CD8-positive, alpha-beta memory T cell (primary cell): ENCODE measurements at regions of chr17 and their contacts with region 1.

Region 1: GRCh38 chr17:38982858-38983746 is 15.9 kb upstream of the FBXO47 start:
- DNase-seq: peak in 4 of 5 donors; percentile 27 to 62 (median 58)
- H3K4me3 ChIP-seq: no peak overlapping the region
- H3K4me3 Mint-ChIP-seq: no peak overlapping the region
- H3K27ac ChIP-seq: no peak overlapping the region
- H3K27ac Mint-ChIP-seq: no peak overlapping the region
- H3K4me1 ChIP-seq: no peaks in the 10 kb centered on the region
- H3K4me1 Mint-ChIP-seq: peaks cover 0 to 5% (median 0%) of the 10 kb centered on the region in 3 donors
- H3K27me3 ChIP-seq: no peaks in the 10 kb centered on the region
- H3K27me3 Mint-ChIP-seq: no peaks in the 10 kb centered on the region

Region 2: DNA sequence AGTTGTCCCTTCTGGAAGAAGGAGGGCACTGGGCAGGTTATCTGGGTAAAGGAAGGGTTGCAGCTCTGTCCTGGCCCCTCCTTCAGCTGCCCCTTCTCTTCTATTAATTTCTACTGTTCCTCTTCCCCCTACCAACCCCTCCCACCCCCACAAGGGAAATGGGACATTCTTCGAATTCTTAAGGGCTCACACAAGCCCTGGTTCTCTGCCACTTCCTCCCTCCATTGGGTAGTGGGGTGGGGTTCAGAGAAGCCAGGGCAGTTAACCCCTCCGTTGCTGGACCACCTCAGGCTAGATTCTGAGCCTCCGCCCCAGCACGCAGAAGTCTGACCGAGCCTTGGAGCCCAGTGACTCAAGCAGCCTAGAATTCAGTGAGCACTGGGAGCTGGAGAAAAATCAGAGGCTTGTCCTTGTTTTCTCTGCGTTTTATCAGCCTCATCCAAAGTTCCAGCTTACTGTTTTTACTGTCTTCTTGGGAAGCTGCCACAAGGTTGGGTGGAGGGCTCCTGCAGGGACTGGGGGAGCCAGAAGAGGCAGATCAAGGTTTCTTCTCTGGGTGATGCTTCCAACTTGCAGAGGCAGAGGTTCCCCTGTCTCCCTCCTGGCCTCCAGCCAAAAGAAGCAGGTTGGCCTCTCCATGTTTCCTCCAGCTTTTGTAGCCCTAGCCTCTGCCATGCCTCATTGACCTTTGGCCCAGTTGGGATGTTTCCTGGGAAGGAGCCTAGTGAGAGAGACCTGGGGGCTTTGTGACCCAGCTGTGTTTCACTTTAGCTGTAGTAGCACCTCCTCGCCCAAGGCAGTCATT is 103.0 kb before region 1 on chr17:
- CTCF ChIA-PET with region 1: no interaction called
- POLR2A ChIA-PET with region 1: no interaction called
- DNase-seq: no peak
- H3K4me3 ChIP-seq: peak overlapping the region; percentile 51
- H3K4me3 Mint-ChIP-seq: peak overlapping the region; percentile 50 to 83 (median 55)
- H3K27ac ChIP-seq: no peak overlapping the region
- H3K27ac Mint-ChIP-seq: peak overlapping the region; percentile 40 to 94 (median 85)
- H3K4me1 ChIP-seq: peaks cover 95% of the 10 kb centered on the region
- H3K4me1 Mint-ChIP-seq: peaks cover 83 to 93% (median 91%) of the 10 kb centered on the region in 3 donors
- H3K27me3 ChIP-seq: no peaks in the 10 kb centered on the region
- H3K27me3 Mint-ChIP-seq: peaks cover 0 to 2% of the 10 kb centered on the region in 2 donors

Region 3: DNA sequence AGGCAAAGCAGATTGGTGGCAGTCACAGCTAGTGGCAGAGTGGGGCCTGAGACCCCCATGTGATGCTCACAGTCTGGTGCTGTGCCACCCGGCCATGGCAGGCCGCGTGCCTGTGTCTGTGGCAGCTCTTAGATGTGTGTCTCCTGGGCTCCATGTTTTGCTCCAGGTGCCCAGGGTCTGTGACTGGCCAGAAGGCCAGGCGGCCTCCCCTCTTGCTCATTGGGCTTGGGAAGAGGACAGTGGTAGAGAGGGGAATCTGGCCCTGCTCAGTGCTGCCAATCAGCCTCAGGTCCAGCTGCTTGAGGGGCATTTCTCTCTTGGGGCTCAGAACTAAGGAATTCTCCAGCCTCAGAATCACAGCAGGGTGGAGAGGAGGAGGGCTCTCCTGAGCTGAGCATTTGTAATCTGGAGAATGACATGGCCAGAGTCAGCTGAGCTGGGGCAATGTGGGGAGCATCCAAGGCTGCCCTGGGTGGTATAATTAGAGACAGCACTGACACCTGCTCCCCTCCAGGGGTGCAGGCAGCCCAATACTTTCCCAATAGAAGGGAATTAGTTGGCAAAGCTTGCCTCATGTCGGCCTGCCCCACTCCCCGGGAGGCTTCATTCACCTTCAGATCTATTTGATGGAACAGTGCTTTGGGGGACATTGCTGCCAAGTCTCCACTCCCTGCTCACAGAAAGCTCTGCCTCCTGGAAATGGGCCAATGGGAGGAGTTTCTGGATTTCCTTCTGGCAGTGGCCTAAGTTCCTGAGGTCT is 60.4 kb before region 1 on chr17:
- CTCF ChIA-PET with region 1: interaction called, 14 read pairs
- POLR2A ChIA-PET with region 1: no interaction called
- DNase-seq: no peak
- H3K4me3 ChIP-seq: no peak overlapping the region
- H3K4me3 Mint-ChIP-seq: no peak overlapping the region
- H3K27ac ChIP-seq: no peak overlapping the region
- H3K27ac Mint-ChIP-seq: peak overlapping the region in 3 of 8 donors; percentile 15 to 35 (median 30)
- H3K4me1 ChIP-seq: peaks cover 24% of the 10 kb centered on the region
- H3K4me1 Mint-ChIP-seq: peaks cover 35 to 48% (median 36%) of the 10 kb centered on the region in 3 donors
- H3K27me3 ChIP-seq: no peaks in the 10 kb centered on the region
- H3K27me3 Mint-ChIP-seq: peaks cover 0 to 2% of the 10 kb centered on the region in 2 donors

Region 4: DNA sequence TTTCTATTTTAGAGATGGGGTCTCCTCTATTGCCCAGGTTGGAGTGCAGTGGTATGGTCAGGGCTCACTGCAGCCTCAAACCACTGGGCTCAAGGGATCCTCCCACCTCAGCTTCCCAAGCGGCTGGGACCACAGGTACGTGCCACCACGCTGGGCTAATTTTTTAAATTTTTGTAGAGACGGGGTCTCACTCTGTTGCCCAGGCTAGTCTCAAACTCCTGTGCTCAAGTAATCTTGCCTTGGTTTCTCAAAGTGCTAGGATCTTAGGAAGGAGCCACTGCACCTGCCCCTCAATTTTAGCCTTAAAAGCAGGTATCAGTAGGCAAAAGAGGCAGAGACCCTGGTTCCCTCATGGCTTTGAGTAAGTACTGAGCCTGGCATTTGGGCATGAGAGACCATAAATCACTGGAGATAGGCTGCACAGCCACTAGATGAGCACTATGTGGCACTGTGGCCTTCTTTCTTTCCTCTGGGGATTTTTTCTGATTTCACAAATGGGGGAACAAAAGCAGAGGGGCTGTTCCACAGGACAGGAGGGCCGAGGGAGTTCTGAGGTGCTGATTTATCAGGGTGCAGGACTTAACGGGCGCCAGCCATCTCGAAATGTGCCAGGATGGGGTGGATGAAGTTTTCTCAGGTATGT is 86.1 kb after region 1 on chr17:
- CTCF ChIA-PET with region 1: interaction called, 10 read pairs
- POLR2A ChIA-PET with region 1: no interaction called
- DNase-seq: peak in 3 of 5 donors; percentile 44 to 56 (median 52)
- H3K4me3 ChIP-seq: no peak overlapping the region
- H3K4me3 Mint-ChIP-seq: no peak overlapping the region
- H3K27ac ChIP-seq: no peak overlapping the region
- H3K27ac Mint-ChIP-seq: peak overlapping the region in 2 of 8 donors; percentile 32 to 38
- H3K4me1 ChIP-seq: no peaks in the 10 kb centered on the region
- H3K4me1 Mint-ChIP-seq: peaks cover 3 to 5% (median 5%) of the 10 kb centered on the region in 3 donors
- H3K27me3 ChIP-seq: no peaks in the 10 kb centered on the region
- H3K27me3 Mint-ChIP-seq: no peaks in the 10 kb centered on the region

Region 5: DNA sequence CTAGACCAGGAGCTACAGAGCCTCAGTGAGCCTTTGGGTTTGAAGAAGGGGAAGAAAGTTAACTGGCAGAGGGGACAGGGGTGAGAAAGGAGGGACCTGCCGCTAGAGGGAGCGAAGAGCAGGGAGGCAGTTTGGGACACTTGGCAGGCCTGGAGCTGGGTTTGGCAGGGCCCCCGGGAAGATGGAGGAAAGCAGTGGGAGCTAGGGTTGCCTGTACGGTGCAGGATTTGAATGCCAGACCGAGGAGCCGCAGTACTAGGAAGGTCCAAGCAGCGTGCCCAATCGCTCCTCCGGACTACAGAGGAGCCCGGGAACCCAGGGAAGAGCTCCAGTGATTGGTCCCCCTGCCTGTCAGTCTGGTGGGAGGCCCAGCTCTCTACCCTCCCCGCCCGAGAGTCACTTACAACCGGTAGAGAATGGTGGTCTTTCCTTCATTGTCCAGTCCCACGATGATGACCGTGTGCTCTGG is 181.6 kb after region 1 on chr17:
- CTCF ChIA-PET with region 1: interaction called, 110 read pairs
- POLR2A ChIA-PET with region 1: interaction called, 5 read pairs
- DNase-seq: peak; percentile 62 to 85 (median 79)
- H3K4me3 ChIP-seq: peak overlapping the region; percentile 92
- H3K4me3 Mint-ChIP-seq: peak overlapping the region; percentile 91 to 98 (median 94)
- H3K27ac ChIP-seq: no peak overlapping the region
- H3K27ac Mint-ChIP-seq: peak overlapping the region in 7 of 8 donors; percentile 19 to 98 (median 82)
- H3K4me1 ChIP-seq: peaks cover 16% of the 10 kb centered on the region
- H3K4me1 Mint-ChIP-seq: peaks cover 31 to 41% (median 32%) of the 10 kb centered on the region in 3 donors
- H3K27me3 ChIP-seq: no peaks in the 10 kb centered on the region
- H3K27me3 Mint-ChIP-seq: peaks cover 0 to 3% of the 10 kb centered on the region in 2 donors

Region 6: DNA sequence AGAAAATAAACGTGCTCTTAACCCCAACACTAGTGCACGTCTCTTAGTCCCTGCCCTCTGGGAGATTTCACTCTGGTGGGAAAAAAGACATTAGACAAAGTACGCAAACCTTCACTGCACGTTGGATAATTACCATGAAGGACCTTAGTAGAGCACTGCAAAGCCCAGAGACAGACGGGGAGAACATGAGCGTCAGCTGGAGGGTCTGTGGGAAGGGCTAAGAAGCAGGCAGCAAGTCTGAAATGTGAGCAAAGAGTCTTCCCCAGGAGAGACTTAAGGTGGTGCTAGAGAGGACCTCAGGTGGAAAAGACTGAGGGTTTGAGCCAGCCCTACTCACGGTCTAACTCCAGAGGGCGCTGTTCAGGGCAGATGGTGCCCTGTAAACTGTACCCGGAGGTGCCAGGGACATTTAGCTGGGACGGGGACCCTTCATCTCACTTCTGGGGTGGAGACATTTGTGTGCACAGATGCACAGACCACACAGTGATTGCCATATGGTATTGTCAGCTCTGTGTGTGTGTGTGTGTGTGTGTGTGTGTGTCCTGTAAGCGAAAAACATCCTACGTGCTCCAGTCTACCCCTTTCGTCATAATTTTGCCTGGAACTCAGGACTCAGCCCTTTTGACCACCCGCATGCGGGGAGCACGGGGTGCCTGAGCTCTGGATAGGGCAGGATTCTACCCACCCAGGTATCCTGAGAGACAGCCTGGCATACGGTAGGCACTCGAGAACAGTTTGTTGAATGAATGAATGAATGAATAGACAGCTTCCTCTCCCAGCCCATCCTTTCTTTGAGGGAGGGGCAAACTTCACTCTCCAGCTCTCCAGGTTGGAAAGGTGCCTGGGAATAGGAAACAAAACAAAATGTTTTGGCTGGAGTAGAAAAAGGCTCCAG is 252.7 kb after region 1 on chr17:
- CTCF ChIA-PET with region 1: interaction called, 14 read pairs
- POLR2A ChIA-PET with region 1: no interaction called
- DNase-seq: peak; percentile 14 to 62 (median 48)
- H3K4me3 ChIP-seq: no peak overlapping the region
- H3K4me3 Mint-ChIP-seq: peak overlapping the region in 2 of 7 donors; percentile 5 to 26
- H3K27ac ChIP-seq: no peak overlapping the region
- H3K27ac Mint-ChIP-seq: peak overlapping the region; percentile 34 to 93 (median 83)
- H3K4me1 ChIP-seq: peaks cover 53% of the 10 kb centered on the region
- H3K4me1 Mint-ChIP-seq: peaks cover 33 to 45% (median 42%) of the 10 kb centered on the region in 3 donors
- H3K27me3 ChIP-seq: no peaks in the 10 kb centered on the region
- H3K27me3 Mint-ChIP-seq: peaks cover 7 to 13% of the 10 kb centered on the region in 2 donors